CD4-positive, alpha-beta T cell (primary cell): ENCODE measurements at regions of chr6 and their contacts with region 1.

Region 1: DNA sequence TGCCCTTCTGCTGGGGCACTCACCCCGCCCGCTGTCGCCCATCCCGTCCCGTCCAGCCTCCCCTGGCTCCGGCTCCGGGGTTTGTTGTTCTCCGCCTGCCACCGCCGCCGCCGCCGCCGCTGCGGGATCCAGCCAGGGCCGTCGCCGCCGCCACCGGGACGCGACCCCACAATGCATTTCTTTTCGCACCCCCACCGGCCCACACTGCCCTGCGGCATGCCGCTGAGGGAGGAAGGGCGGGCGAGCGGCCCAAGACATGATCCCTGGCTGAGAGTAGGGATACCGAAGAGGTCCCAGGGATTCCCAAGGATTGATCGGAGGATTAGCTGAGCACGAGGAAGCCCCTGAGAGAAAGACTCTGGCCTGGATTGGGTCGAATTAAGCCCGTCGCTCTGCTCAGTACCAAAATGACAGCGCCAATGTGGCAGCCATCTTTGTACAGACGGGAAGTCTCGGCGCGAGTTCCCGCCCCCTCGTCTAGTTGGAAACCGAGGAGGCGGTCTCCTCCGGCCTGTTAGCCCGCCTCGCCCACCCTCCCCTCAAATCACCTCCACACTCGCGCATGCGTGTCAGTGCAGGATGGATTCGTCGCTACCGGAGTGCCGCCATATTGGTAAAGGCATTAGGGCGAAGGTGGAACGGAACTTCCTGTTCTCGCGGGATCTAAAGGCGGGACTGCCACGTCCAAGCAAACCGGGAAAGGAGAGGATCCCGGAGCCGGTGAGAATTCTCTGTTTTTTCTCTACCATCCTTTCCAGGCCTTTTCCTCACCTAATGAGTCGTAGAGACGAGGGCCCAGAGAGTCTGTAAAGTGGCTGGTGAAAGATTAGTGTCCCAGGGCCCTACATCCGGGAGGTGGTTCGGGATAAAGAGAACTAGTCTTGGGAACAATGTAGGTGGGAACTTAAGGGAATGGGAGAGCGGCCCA is at the starts of genes RXRB and SLC39A7:
- DNase-seq: peak; percentile 97 to 100 (median 99)
- ATAC-seq: peak; percentile 78
- H3K4me3 ChIP-seq: peak within 1 kb of the TSS; percentile 78
- H3K4me3 Mint-ChIP-seq: peak within 1 kb of the TSS; percentile 98
- H3K27ac ChIP-seq: peak within 1 kb of the TSS; percentile 97
- H3K27ac Mint-ChIP-seq: peak within 1 kb of the TSS; percentile 100
- H3K4me1 ChIP-seq: peaks cover 65% of the 10 kb centered on the region
- H3K4me1 Mint-ChIP-seq: peaks cover 79% of the 10 kb centered on the region
- H3K27me3 ChIP-seq: no peaks in the 10 kb centered on the region
- H3K27me3 Mint-ChIP-seq: no peaks in the 10 kb centered on the region
- CTCF ChIP-seq: no peak
- total RNA-seq, gene RXRB: 42.9 to 45.0 TPM
- total RNA-seq, gene SLC39A7: 8.6 to 9.6 TPM

Region 2: DNA sequence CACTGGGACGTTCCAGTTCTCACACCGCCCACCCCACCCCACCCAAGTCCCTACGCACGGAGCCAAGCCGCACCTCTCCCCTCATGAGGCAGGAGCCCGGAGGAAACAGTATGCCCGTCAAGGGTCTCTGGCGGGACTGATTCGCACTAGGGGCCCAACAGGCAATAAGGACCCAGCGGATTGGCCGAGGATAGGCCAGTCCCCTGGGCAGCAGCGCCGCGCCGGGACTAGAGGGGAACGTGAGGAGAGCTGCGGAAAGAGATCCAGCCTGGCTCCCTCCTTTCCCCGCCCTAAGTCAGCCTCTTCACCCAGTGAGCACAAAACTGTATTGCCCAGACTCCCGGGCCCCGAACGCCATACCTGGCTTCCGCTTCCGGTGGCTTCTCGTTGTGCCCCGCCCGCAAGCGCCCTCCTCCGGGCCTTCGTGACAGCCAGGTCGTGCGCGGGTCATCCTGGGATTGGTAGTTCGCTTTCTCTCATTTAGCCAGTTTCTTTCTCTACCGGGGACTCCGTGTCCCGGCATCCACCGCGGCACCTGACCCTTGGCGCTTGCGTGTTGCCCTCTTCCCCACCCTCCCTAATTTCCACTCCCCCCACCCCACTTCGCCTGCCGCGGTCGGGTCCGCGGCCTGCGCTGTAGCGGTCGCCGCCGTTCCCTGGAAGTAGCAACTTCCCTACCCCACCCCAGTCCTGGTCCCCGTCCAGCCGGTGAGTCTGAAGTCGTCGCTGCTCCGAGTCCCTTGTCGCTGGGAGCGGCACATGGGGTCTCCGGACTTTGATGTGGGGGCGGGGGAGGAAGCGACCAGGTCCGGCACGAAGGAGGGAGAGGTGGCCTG is 1534.8 kb before region 1 on chr6 and contains the start of gene CSNK2B:
- CTCF ChIA-PET with region 1: no interaction called
- POLR2A ChIA-PET with region 1: no interaction called
- intact Hi-C with region 1: loop called in 1 of 2 experiments (anchors 10 kb)
- DNase-seq: peak; percentile 94 to 99 (median 97)
- ATAC-seq: peak; percentile 85
- H3K4me3 ChIP-seq: peak within 1 kb of the TSS; percentile 79
- H3K4me3 Mint-ChIP-seq: peak within 1 kb of the TSS; percentile 95
- H3K27ac ChIP-seq: peak within 1 kb of the TSS; percentile 93 to 96
- H3K27ac Mint-ChIP-seq: peak within 1 kb of the TSS; percentile 97
- H3K4me1 ChIP-seq: peaks cover 61% of the 10 kb centered on the region
- H3K4me1 Mint-ChIP-seq: peaks cover 51% of the 10 kb centered on the region
- H3K27me3 ChIP-seq: no peaks in the 10 kb centered on the region
- H3K27me3 Mint-ChIP-seq: no peaks in the 10 kb centered on the region
- CTCF ChIP-seq: no peak
- total RNA-seq, gene CSNK2B: 88.0 to 92.6 TPM

Region 3: DNA sequence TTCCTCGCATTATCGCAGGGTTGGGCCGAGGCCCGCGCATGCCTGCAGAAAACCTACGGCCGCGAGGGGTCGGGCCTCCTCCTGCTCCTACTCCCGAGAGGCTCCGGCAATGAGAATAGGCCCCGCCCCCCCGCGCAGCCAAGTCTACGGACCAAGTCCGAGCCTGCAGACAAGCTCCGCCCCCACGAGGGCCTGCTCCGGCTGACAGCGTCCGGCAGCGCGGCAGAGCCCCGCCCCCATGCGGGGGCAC is 1004.9 kb before region 1 on chr6:
- CTCF ChIA-PET with region 1: no interaction called
- POLR2A ChIA-PET with region 1: no interaction called
- intact Hi-C with region 1: loop called in 1 of 2 experiments (anchors 5 kb)
- DNase-seq: peak in 13 of 14 experiments; percentile 97 to 100 (median 100)
- ATAC-seq: peak; percentile 82
- H3K4me3 ChIP-seq: peak overlapping the region; percentile 100
- H3K4me3 Mint-ChIP-seq: peak overlapping the region; percentile 99
- H3K27ac ChIP-seq: peak overlapping the region; percentile 87 to 100
- H3K27ac Mint-ChIP-seq: peak overlapping the region; percentile 96
- H3K4me1 ChIP-seq: peaks cover 52% of the 10 kb centered on the region
- H3K4me1 Mint-ChIP-seq: peaks cover 48% of the 10 kb centered on the region
- H3K27me3 ChIP-seq: no peaks in the 10 kb centered on the region
- H3K27me3 Mint-ChIP-seq: no peaks in the 10 kb centered on the region
- CTCF ChIP-seq: peak; percentile 31

Region 4: DNA sequence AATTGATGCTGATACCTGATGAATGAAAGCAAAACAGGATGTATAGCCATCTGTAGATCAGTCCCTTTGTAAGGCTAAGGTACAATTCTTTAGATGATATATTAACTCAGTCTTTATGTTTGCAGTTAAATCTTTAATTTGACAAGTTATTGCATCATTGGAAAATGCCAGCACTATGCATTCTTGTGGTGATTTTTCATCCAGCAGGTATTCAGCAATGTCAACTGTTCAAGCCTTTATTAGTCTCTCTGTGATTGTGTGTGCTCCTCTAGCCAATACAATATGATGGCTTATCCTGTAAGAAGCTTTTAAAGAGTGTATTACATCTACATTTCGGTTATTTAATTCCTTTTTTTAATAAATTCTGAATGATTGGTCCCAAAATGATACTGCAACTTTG is 293.9 kb before region 1 on chr6:
- CTCF ChIA-PET with region 1: no interaction called
- POLR2A ChIA-PET with region 1: no interaction called
- intact Hi-C with region 1: no loop called
- DNase-seq: no peak
- ATAC-seq: no peak
- H3K4me3 ChIP-seq: no peak overlapping the region
- H3K4me3 Mint-ChIP-seq: no peak overlapping the region
- H3K27ac ChIP-seq: no peak overlapping the region
- H3K27ac Mint-ChIP-seq: no peak overlapping the region
- H3K4me1 ChIP-seq: no peaks in the 10 kb centered on the region
- H3K4me1 Mint-ChIP-seq: no peaks in the 10 kb centered on the region
- H3K27me3 ChIP-seq: no peaks in the 10 kb centered on the region
- H3K27me3 Mint-ChIP-seq: peaks cover 10% of the 10 kb centered on the region
- CTCF ChIP-seq: no peak

Region 5: DNA sequence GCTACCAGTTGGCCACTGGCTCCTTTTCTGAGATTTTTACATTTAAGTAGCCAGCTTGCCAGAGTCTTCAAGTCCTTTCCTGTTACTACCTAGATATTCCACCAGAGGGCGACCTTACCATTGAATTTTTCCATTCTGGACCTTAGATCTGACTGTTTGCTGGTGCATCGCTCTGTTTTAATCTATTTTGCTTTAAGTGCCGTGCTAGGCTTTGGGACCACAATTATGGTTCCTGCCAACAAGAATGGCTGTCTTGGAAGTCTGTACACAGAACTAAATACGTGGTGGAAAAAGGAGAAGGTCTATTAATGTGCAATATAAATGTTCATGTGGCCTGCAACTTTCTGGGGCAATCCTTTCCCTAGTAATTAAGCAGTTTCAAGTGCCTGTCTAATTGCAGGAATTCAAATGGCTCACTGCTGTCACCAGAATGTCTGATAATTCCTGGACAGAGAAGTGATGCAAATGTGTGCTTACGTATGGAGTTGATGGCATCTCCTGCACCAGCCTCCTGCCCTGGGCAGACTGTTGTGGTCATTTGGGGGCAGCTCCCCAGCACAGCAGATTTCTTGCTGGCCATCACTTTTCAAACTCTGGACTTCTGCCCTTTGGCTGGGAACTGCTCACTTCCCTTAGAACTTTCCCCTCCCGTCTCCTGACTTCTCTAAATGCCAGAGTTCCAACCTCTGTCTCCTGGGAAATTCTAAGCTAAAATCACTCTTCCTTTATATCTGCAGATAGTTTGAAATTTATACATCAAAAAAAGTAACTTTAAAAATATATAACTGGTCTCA is 185.4 kb before region 1 on chr6:
- CTCF ChIA-PET with region 1: no interaction called
- POLR2A ChIA-PET with region 1: no interaction called
- intact Hi-C with region 1: loop called in 1 of 2 experiments (anchors 1 kb)
- DNase-seq: peak in 9 of 14 experiments; percentile 8 to 88 (median 48)
- ATAC-seq: peak; percentile 78
- H3K4me3 ChIP-seq: no peak overlapping the region
- H3K4me3 Mint-ChIP-seq: no peak overlapping the region
- H3K27ac ChIP-seq: no peak overlapping the region
- H3K27ac Mint-ChIP-seq: no peak overlapping the region
- H3K4me1 ChIP-seq: peaks cover 22% of the 10 kb centered on the region
- H3K4me1 Mint-ChIP-seq: peaks cover 36% of the 10 kb centered on the region
- H3K27me3 ChIP-seq: peaks cover 8 to 10% of the 10 kb centered on the region in 2 experiments
- H3K27me3 Mint-ChIP-seq: peaks cover 5% of the 10 kb centered on the region
- CTCF ChIP-seq: peak; percentile 89

Region 6: DNA sequence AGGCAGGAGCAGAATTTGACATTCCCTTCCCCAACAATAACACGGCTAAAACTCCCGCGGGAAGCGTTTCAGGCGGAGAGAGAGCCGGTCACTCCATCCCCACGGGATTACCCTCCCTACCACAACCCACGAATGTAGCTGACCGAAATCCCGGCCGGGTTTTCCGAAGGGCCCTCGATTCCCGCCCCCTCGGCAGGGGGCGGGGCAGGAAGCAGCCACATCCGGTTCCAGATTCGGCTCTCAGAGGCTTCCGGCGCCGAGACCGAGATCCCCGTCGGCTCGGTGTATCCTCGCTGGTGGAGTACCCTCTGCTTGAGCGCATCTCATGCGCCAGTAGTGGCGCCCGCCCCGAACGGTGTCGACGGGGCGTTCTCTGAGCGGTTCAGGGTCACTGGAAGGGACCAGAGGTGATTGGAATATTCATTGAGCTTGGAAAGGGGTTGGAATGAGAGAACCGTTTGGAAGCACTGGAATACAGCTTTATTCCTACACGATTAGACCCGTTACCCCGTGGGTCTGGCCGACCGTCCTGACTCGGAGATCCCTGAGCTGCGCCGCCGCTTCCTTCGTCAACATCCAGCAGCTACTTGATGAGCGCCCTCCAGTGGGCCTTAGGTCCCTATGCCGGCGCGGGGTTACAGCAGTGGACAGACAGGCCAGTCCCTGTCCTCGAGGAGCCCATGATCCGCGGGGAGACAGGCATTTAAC is 98.9 kb after region 1 on chr6:
- CTCF ChIA-PET with region 1: interaction called, 3 read pairs
- POLR2A ChIA-PET with region 1: interaction called, 4 read pairs
- intact Hi-C with region 1: loop called in 1 of 2 experiments (anchors 1 kb)
- DNase-seq: peak; percentile 89 to 97 (median 92)
- ATAC-seq: peak; percentile 84
- H3K4me3 ChIP-seq: peak overlapping the region; percentile 91
- H3K4me3 Mint-ChIP-seq: peak overlapping the region; percentile 98
- H3K27ac ChIP-seq: peak overlapping the region; percentile 90 to 96
- H3K27ac Mint-ChIP-seq: peak overlapping the region; percentile 99
- H3K4me1 ChIP-seq: peaks cover 34% of the 10 kb centered on the region
- H3K4me1 Mint-ChIP-seq: peaks cover 32% of the 10 kb centered on the region
- H3K27me3 ChIP-seq: no peaks in the 10 kb centered on the region
- H3K27me3 Mint-ChIP-seq: no peaks in the 10 kb centered on the region
- CTCF ChIP-seq: peak; percentile 74

Region 7: GRCh38 chr6:33410050-33410710 is 209.7 kb after region 1 on chr6:
- CTCF ChIA-PET with region 1: no interaction called
- POLR2A ChIA-PET with region 1: no interaction called
- intact Hi-C with region 1: loop called in 1 of 2 experiments (anchors 5 kb)
- DNase-seq: peak; percentile 92 to 99 (median 98)
- ATAC-seq: peak; percentile 71
- H3K4me3 ChIP-seq: peak overlapping the region; percentile 81
- H3K4me3 Mint-ChIP-seq: peak overlapping the region; percentile 95
- H3K27ac ChIP-seq: peak overlapping the region; percentile 95 to 99
- H3K27ac Mint-ChIP-seq: peak overlapping the region; percentile 98
- H3K4me1 ChIP-seq: peaks cover 64% of the 10 kb centered on the region
- H3K4me1 Mint-ChIP-seq: peaks cover 57% of the 10 kb centered on the region
- H3K27me3 ChIP-seq: no peaks in the 10 kb centered on the region
- H3K27me3 Mint-ChIP-seq: no peaks in the 10 kb centered on the region
- CTCF ChIP-seq: no peak